IMR-90 (cell line): ENCODE measurements at regions of chr3 and their contacts with region 1.

Region 1: DNA sequence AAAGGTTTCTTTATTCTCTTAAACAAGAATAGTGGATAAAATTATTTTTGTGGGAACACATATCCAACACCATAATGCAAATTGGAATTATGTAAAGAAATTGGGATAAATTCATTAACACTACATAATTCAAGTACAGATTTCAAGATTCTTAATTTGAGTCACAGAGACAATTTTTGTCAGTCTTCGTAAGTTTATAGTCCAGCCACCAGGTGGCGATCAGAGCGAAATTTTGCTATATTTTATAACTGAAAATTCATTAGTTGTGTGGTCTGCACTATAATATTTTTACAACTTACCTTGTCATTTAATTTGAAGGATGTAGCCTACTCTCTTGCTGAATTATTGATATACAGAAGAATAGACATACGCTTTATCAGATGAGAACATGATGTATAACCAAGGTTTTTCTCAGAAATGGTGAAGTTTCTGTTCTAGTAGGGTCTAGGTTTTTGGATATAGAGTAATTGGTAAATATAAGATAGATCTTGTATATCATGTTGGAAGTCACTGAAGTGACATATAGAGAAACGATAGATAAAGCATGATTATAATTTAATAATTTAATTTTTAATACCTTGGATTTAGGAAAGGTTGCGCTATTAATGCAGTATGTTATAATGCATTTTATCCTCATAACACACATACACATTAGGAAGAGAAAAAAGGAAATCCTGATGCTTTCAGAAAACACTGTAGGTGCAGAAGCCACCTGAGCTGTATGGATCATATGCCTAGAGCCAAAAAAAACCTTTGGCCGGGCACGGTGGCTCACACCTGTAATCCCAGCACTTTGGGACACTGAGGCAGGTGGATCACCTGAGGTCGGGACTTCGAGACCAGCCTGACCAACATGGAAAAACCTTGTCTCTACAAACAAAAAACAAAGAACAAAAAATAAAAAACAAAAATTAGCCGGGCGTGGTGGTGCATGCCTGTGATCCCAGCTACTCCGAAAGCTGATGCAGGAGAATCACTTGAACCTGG is 31.7 kb downstream of the PLSCR4 start:
- DNase-seq: peak; percentile 44
- ATAC-seq: no peak; the same call in 1 of the 2 replicates
- H3K4me3 ChIP-seq: no peak overlapping the region
- H3K27ac ChIP-seq: no peak overlapping the region
- H3K4me1 ChIP-seq: peaks cover 5% of the 10 kb centered on the region
- H3K27me3 ChIP-seq: no peaks in the 10 kb centered on the region
- CTCF ChIP-seq: peak; percentile 68
- POLR2A ChIP-seq: no peak
- RAD21 ChIP-seq: peak; percentile 69

Region 2: GRCh38 chr3:146160964-146161662 is 58.1 kb before region 1 on chr3 and contains the start of gene PLOD2:
- CTCF ChIA-PET with region 1: no interaction called
- POLR2A ChIA-PET with region 1: no interaction called
- dilution Hi-C with region 1: no loop called
- in situ Hi-C with region 1: no loop called
- intact Hi-C with region 1: no loop called
- DNase-seq: peak; percentile 92
- ATAC-seq: peak; percentile 76
- H3K4me3 ChIP-seq: peak within 1 kb of the TSS; percentile 91
- H3K27ac ChIP-seq: peak within 1 kb of the TSS; percentile 94
- H3K4me1 ChIP-seq: peaks cover 20% of the 10 kb centered on the region
- H3K27me3 ChIP-seq: no peaks in the 10 kb centered on the region
- CTCF ChIP-seq: 0 out of 2 replicates have a peak, but pooled peaks have one; percentile 15
- POLR2A ChIP-seq: peak; percentile 97
- RAD21 ChIP-seq: 0 out of 2 replicates have a peak, but pooled peaks have one; percentile 2
- total RNA-seq, gene PLOD2: 117 and 225 TPM in 2 replicates

Region 3: DNA sequence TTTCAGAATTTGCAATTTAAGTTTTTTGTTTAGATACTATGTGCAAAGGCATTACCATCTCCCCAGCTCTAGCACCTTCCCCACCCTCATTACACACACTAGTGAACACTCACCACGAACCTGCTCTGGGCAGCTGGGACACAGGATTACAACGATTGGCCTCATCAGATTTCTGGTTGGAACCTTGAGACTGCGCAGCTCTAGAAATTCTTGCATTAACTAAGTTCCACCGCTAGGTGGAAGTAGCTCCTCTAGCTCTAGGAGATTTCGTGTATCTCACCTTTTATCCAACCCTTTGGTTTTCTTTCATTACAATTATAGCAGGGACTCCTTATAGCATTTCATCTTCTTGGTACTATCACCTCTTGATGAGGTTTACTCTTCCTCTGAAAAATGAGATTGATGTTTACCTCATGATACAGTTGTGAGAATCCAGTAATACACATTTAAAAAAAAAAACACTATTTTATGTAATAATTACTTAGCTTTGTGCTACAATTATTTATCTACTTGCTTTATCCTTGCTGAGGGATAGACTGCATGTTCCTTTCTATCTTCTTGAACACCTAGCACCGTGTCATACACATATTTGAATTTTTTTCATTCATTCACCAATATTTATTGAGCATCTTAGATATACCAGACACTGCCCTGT is 29.5 kb before region 1 on chr3:
- CTCF ChIA-PET with region 1: no interaction called
- POLR2A ChIA-PET with region 1: no interaction called
- dilution Hi-C with region 1: no loop called
- in situ Hi-C with region 1: no loop called
- intact Hi-C with region 1: loop called (anchors 2 kb)
- DNase-seq: peak; percentile 64
- ATAC-seq: peak; percentile 95
- H3K4me3 ChIP-seq: no peak overlapping the region
- H3K27ac ChIP-seq: no peak overlapping the region
- H3K4me1 ChIP-seq: no peaks in the 10 kb centered on the region
- H3K27me3 ChIP-seq: no peaks in the 10 kb centered on the region
- CTCF ChIP-seq: peak; percentile 79
- POLR2A ChIP-seq: no peak
- RAD21 ChIP-seq: peak; percentile 83

Region 4: DNA sequence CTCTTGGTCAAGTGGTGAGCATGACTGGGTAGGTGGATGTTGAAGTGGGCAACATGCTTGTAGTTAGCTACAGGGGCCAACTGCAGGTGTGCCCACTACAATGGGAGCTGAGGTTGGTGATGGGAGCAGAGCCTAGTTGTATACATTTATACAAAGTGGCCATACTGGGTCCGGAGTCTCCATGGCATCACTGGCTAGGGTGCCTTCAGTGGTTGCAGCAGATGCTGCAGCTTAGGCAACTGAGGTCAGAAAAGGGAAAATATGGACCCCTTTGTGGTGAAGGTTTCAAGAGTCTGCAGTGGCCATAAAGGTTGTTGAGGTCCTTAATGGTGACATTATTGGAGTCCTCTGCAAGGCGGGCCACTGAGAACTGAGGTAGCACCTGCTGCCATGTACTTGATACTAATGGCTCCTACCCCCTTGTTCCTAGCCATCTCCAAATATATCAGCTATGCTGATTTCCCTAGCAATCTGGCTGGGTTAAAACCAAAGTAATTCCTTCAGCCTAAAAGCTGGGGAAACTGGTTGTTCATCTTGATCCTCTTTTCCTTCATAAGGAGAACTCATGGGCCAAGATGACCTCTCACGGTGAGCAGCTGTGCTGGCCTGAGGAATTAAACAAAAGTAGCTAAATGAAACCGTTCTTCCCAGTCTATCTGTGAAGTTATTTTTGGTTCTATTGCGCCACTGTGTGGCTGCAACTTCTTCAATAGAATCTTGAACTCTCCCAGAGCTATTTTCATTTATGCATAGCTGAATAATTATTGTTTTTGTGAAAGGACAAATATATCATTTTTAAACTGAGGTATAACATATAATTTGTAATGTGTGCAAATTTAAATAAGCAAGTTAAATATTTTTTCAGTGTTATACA is 107.7 kb after region 1 on chr3:
- CTCF ChIA-PET with region 1: interaction called, 17 read pairs
- POLR2A ChIA-PET with region 1: no interaction called
- dilution Hi-C with region 1: no loop called
- in situ Hi-C with region 1: loop called (anchors 5 kb)
- intact Hi-C with region 1: loop called (anchors 1 kb)
- DNase-seq: peak; percentile 82
- ATAC-seq: peak; percentile 93
- H3K4me3 ChIP-seq: no peak overlapping the region
- H3K27ac ChIP-seq: no peak overlapping the region
- H3K4me1 ChIP-seq: no peaks in the 10 kb centered on the region
- H3K27me3 ChIP-seq: no peaks in the 10 kb centered on the region
- CTCF ChIP-seq: peak; percentile 82
- POLR2A ChIP-seq: no peak
- RAD21 ChIP-seq: peak; percentile 84

Region 5: GRCh38 chr3:146589899-146590508 is 370.8 kb after region 1 on chr3:
- CTCF ChIA-PET with region 1: no interaction called
- POLR2A ChIA-PET with region 1: no interaction called
- dilution Hi-C with region 1: no loop called
- in situ Hi-C with region 1: loop called (anchors 10 kb)
- intact Hi-C with region 1: no loop called
- DNase-seq: peak; percentile 52
- ATAC-seq: peak; percentile 71
- H3K4me3 ChIP-seq: no peak overlapping the region
- H3K27ac ChIP-seq: no peak overlapping the region
- H3K4me1 ChIP-seq: no peaks in the 10 kb centered on the region
- H3K27me3 ChIP-seq: no peaks in the 10 kb centered on the region
- CTCF ChIP-seq: peak; percentile 66
- POLR2A ChIP-seq: no peak
- RAD21 ChIP-seq: peak; percentile 52; the same call in 1 of the 2 replicates